RWPE1 (cell line): ENCODE measurements at regions of chr22 and their contacts with region 1.

Region 1: GRCh38 chr22:31838917-31839316 is 85.1 kb downstream of the DEPDC5 start:
- DNase-seq: peak; percentile 63
- H3K27ac ChIP-seq: no peak overlapping the region
- CTCF ChIP-seq: no peak

Region 2: GRCh38 chr22:31826443-31826842 is 12.5 kb before region 1 on chr22:
- CTCF ChIA-PET with region 1: no interaction called
- POLR2A ChIA-PET with region 1: no interaction called
- DNase-seq: no peak
- H3K27ac ChIP-seq: no peak overlapping the region
- CTCF ChIP-seq: no peak

Region 3: GRCh38 chr22:31852691-31853421 is 13.9 kb after region 1 on chr22:
- CTCF ChIA-PET with region 1: interaction called, 10 read pairs
- POLR2A ChIA-PET with region 1: no interaction called
- DNase-seq: no peak
- H3K27ac ChIP-seq: no peak overlapping the region
- CTCF ChIP-seq: no peak

Region 4: DNA sequence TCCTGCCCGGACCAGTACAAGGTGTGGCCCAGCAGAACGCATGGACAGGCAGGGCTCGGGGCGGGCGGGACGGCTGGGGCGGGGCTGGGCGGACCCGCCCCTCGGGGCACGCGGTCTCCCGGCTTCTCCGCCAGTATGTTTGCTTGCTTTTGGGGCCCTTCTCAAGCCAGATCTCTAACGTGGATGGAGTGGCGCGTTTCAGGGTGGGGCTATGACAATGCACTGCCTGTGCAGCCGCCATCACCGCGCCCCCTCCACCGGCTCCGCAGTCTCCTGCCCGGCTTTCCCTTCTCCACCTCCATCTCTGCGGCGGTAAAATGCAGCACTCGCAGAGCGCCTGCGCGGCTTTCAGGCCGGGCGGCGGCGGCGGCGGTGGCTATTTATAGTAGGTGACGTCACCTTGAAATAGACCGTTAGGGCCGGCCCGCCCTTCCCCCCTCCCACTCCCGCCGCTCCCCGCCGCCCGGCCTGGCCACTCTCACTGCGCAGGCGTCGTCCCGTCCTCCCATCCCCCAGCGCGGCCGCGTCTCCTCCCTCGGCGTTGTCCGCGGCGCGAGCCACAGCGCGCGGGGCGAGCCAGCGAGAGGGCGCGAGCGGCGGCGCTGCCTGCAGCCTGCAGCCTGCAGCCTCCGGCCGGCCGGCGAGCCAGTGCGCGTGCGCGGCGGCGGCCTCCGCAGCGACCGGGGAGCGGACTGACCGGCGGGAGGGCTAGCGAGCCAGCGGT is 105.2 kb after region 1 on chr22 and contains the start of gene YWHAH:
- CTCF ChIA-PET with region 1: no interaction called
- POLR2A ChIA-PET with region 1: no interaction called
- DNase-seq: peak; percentile 96
- H3K27ac ChIP-seq: peak within 1 kb of the TSS; percentile 97
- CTCF ChIP-seq: no peak